IMR-90 (cell line): ENCODE measurements at regions of chr6 and their contacts with region 1.

Region 1: DNA sequence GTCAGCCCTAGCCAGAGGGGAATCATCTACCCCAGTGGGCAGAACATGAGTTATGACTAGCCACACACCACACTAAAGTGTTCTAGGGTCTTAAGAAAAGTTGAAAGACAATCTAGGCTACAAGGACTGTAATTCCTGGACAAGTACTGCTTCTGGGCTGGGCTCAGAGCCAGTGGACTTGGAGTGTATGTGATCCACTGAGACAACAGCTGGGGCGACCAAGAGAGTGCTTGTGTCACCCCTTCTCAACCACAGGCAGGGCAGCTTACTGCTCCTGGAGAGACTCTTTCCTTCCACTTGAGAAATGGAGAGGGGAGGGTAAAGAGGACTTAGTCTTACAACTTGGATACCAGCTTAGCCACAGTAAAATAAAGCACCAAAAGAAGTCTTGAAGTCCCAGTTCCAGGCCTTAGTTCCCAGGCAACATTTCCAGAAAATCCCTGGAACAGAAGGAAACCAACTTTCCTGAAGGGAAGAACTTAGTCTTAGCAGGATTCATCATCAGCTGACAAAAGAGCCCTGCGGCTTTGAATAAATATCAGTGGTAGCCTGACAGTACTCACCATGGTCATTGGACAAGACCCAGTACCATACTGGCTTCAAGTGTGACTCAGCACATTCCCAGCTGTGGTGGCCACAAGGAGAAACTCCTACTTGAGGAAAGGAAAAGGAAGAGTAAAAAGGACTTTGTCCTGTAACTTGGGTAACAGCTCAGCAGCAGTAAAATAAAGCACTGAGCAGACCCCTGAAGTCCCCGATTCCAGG is 355.1 kb upstream of the ADGRB3 start:
- DNase-seq: no peak
- ATAC-seq: no peak
- H3K4me3 ChIP-seq: no peak overlapping the region
- H3K27ac ChIP-seq: no peak overlapping the region
- H3K4me1 ChIP-seq: no peaks in the 10 kb centered on the region
- H3K27me3 ChIP-seq: no peaks in the 10 kb centered on the region
- CTCF ChIP-seq: no peak
- POLR2A ChIP-seq: no peak
- RAD21 ChIP-seq: no peak

Region 2: DNA sequence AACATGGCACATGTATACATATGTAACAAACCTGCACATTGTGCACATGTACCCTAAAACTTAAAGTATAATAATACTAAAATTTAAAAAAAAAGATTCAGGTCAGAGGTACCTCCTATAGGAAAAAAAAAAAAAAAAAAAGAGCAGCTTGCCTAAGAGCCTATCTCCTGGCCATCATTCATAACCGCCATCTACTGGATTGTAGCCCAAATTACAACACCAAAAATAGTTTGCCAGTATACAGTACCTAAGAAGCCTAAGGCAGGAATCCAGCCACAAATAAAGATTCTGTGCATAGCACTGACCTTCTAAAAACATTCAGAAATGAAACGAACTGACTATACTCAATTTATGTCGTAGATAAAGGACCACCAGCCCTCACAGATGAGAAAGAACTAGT is 83.3 kb before region 1 on chr6:
- CTCF ChIA-PET with region 1: no interaction called
- POLR2A ChIA-PET with region 1: no interaction called
- dilution Hi-C with region 1: no loop called
- in situ Hi-C with region 1: loop called (anchors 25 kb)
- intact Hi-C with region 1: no loop called
- DNase-seq: no peak
- ATAC-seq: no peak
- H3K4me3 ChIP-seq: no peak overlapping the region
- H3K27ac ChIP-seq: no peak overlapping the region
- H3K4me1 ChIP-seq: no peaks in the 10 kb centered on the region
- H3K27me3 ChIP-seq: no peaks in the 10 kb centered on the region
- CTCF ChIP-seq: no peak
- POLR2A ChIP-seq: no peak
- RAD21 ChIP-seq: no peak

Region 3: GRCh38 chr6:68326762-68327161 is 46.8 kb after region 1 on chr6:
- CTCF ChIA-PET with region 1: no interaction called
- POLR2A ChIA-PET with region 1: no interaction called
- dilution Hi-C with region 1: no loop called
- in situ Hi-C with region 1: no loop called
- intact Hi-C with region 1: no loop called
- DNase-seq: no peak
- ATAC-seq: no peak
- H3K4me3 ChIP-seq: no peak overlapping the region
- H3K27ac ChIP-seq: no peak overlapping the region
- H3K4me1 ChIP-seq: no peaks in the 10 kb centered on the region
- H3K27me3 ChIP-seq: no peaks in the 10 kb centered on the region
- CTCF ChIP-seq: no peak
- POLR2A ChIP-seq: no peak
- RAD21 ChIP-seq: no peak